Naive thymus-derived CD4-positive, alpha-beta T cell (primary cell): ENCODE measurements at regions of chr4 and their contacts with region 1.

Region 1: GRCh38 chr4:98446499-98447375 is 185.6 kb downstream of the RAP1GDS1 start:
- DNase-seq: peak in 7 of 9 donors; percentile 23 to 53 (median 42)
- ATAC-seq: peak; percentile 89
- H3K4me3 ChIP-seq: peak overlapping the region; percentile 9
- H3K4me3 Mint-ChIP-seq: peak overlapping the region; percentile 49 to 75 (median 71)
- H3K27ac ChIP-seq: no peak overlapping the region
- H3K27ac Mint-ChIP-seq: peak overlapping the region; percentile 52 to 88 (median 76)
- H3K4me1 ChIP-seq: peaks cover 30 to 39% of the 10 kb centered on the region in 2 donors
- H3K4me1 Mint-ChIP-seq: peaks cover 33 to 44% (median 37%) of the 10 kb centered on the region in 7 donors
- H3K27me3 ChIP-seq: no peaks in the 10 kb centered on the region
- H3K27me3 Mint-ChIP-seq: no peaks in the 10 kb centered on the region

Region 2: DNA sequence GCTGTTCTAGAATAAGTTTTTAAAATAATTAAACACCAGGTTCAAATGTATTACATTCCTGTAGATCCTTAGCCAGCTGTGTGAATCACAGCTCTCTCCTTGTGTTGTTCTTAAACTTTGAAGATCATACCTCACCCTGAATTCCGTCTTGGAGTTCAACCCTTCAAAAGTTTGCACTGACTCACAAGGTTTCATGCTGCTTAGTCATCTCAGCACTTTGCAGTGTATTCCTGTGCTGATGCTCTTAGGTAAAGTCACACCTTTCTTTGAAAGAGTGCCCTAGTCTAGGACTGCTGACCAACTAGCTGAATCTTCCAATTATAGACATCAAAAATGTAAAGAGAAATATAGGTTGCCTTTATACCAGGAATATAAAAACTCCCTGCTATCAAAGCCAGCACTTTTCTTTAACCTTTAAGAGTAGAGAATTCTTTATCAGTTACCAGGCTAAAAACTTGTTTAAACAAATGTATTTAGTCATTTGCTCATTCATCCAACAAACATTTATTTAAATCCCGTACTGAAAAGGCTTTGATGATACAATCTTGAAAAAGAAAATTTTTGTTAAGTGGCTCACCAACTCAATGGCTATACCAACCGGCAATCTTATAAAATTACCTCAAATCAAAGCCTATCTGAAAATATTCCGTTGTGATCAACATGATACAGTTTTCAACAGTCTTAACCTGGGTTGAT is 15.9 kb before region 1 on chr4:
- CTCF ChIA-PET with region 1: no interaction called
- POLR2A ChIA-PET with region 1: no interaction called
- intact Hi-C with region 1: loop called in 1 of 2 experiments (anchors 2 kb)
- DNase-seq: no peak
- ATAC-seq: no peak
- H3K4me3 ChIP-seq: no peak overlapping the region
- H3K4me3 Mint-ChIP-seq: no peak overlapping the region
- H3K27ac ChIP-seq: no peak overlapping the region
- H3K27ac Mint-ChIP-seq: no peak overlapping the region
- H3K4me1 ChIP-seq: no peaks in the 10 kb centered on the region
- H3K4me1 Mint-ChIP-seq: peaks cover 0 to 15% (median 6%) of the 10 kb centered on the region in 7 donors
- H3K27me3 ChIP-seq: no peaks in the 10 kb centered on the region
- H3K27me3 Mint-ChIP-seq: no peaks in the 10 kb centered on the region

Region 3: DNA sequence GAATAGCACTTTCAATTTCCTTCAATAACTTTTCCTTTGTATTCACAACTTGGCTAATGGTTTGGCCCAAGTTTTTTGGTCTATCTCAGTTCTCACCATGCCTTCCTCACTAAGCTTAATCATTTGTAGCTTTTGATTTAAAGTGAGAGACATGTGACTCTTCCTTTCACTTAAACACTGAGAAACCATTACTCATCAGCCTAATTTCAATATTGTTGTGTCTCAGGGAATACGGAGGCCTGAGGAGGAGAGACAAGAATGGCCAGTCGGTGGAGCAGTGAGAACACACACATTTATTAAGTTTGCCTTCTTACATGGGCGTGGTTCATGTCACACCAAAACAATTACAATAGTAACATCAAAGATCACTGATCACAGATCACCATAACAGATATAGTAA is 155.0 kb after region 1 on chr4:
- CTCF ChIA-PET with region 1: no interaction called
- POLR2A ChIA-PET with region 1: no interaction called
- intact Hi-C with region 1: no loop called
- DNase-seq: no peak
- ATAC-seq: no peak
- H3K4me3 ChIP-seq: no peak overlapping the region
- H3K4me3 Mint-ChIP-seq: peak overlapping the region in 7 of 10 donors; percentile 1 to 70 (median 29)
- H3K27ac ChIP-seq: no peak overlapping the region
- H3K27ac Mint-ChIP-seq: peak overlapping the region in 6 of 9 donors; percentile 0 to 50 (median 18)
- H3K4me1 ChIP-seq: peaks cover 0 to 27% of the 10 kb centered on the region in 2 donors
- H3K4me1 Mint-ChIP-seq: peaks cover 18 to 47% (median 44%) of the 10 kb centered on the region in 7 donors
- H3K27me3 ChIP-seq: no peaks in the 10 kb centered on the region
- H3K27me3 Mint-ChIP-seq: no peaks in the 10 kb centered on the region

Region 4: GRCh38 chr4:98706200-98706813 is 259.6 kb after region 1 on chr4:
- CTCF ChIA-PET with region 1: no interaction called
- POLR2A ChIA-PET with region 1: no interaction called
- intact Hi-C with region 1: loop called in 1 of 2 experiments (anchors 1 kb)
- DNase-seq: peak in 7 of 9 donors; percentile 21 to 76 (median 71)
- ATAC-seq: peak; percentile 96
- H3K4me3 ChIP-seq: peak overlapping the region; percentile 37
- H3K4me3 Mint-ChIP-seq: peak overlapping the region; percentile 74 to 87 (median 80)
- H3K27ac ChIP-seq: no peak overlapping the region
- H3K27ac Mint-ChIP-seq: peak overlapping the region; percentile 40 to 93 (median 81)
- H3K4me1 ChIP-seq: peaks cover 29 to 30% of the 10 kb centered on the region in 2 donors
- H3K4me1 Mint-ChIP-seq: peaks cover 24 to 50% (median 41%) of the 10 kb centered on the region in 7 donors
- H3K27me3 ChIP-seq: no peaks in the 10 kb centered on the region
- H3K27me3 Mint-ChIP-seq: no peaks in the 10 kb centered on the region